Endothelial cell of umbilical vein (primary cell): ENCODE measurements at regions of chr16 and their contacts with region 1.

Region 1: GRCh38 chr16:13919683-13920509 is at the start of gene ERCC4:
- DNase-seq: peak; percentile 100
- H3K4me3 ChIP-seq: peak within 1 kb of the TSS; percentile 66 to 83 (median 67)
- H3K27ac ChIP-seq: peak within 1 kb of the TSS; percentile 37
- H3K4me1 ChIP-seq: peaks cover 10% of the 10 kb centered on the region
- H3K27me3 ChIP-seq: peaks cover 3% of the 10 kb centered on the region in 2 experiments
- CTCF ChIP-seq: peak; percentile 97
- POLR2A ChIP-seq: peak; percentile 83
- total RNA-seq, gene ERCC4: 15.1 and 17.1 TPM in 2 replicates

Region 2: GRCh38 chr16:13718748-13719147 is 201.1 kb before region 1 on chr16:
- CTCF ChIA-PET with region 1: no interaction called
- POLR2A ChIA-PET with region 1: no interaction called
- dilution Hi-C with region 1: no loop called
- intact Hi-C with region 1: no loop called
- DNase-seq: no peak
- H3K4me3 ChIP-seq: no peak overlapping the region
- H3K27ac ChIP-seq: no peak overlapping the region
- H3K4me1 ChIP-seq: no peaks in the 10 kb centered on the region
- H3K27me3 ChIP-seq: no peaks in the 10 kb centered on the region
- CTCF ChIP-seq: no peak
- POLR2A ChIP-seq: no peak

Region 3: DNA sequence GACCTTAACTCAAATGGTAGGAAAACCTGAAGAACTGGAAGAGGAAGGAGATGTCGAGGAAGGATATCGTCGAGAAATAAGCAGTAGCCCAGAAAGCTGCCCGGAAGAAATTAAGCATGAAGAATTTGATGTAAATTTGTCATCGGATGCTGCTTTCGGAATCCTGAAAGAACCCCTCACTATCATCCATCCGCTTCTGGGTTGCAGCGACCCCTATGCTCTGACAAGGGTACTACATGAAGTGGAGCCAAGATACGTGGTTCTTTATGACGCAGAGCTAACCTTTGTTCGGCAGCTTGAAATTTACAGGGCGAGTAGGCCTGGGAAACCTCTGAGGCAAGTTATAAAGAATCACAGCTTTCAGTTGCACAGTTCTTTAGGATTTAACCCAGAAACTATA is 15.5 kb after region 1 on chr16:
- CTCF ChIA-PET with region 1: interaction called, 11 read pairs
- POLR2A ChIA-PET with region 1: no interaction called
- dilution Hi-C with region 1: no loop called
- intact Hi-C with region 1: no loop called
- DNase-seq: no peak
- H3K4me3 ChIP-seq: no peak overlapping the region
- H3K27ac ChIP-seq: no peak overlapping the region
- H3K4me1 ChIP-seq: no peaks in the 10 kb centered on the region
- H3K27me3 ChIP-seq: no peaks in the 10 kb centered on the region
- CTCF ChIP-seq: peak; percentile 50 to 58
- POLR2A ChIP-seq: no peak

Region 4: DNA sequence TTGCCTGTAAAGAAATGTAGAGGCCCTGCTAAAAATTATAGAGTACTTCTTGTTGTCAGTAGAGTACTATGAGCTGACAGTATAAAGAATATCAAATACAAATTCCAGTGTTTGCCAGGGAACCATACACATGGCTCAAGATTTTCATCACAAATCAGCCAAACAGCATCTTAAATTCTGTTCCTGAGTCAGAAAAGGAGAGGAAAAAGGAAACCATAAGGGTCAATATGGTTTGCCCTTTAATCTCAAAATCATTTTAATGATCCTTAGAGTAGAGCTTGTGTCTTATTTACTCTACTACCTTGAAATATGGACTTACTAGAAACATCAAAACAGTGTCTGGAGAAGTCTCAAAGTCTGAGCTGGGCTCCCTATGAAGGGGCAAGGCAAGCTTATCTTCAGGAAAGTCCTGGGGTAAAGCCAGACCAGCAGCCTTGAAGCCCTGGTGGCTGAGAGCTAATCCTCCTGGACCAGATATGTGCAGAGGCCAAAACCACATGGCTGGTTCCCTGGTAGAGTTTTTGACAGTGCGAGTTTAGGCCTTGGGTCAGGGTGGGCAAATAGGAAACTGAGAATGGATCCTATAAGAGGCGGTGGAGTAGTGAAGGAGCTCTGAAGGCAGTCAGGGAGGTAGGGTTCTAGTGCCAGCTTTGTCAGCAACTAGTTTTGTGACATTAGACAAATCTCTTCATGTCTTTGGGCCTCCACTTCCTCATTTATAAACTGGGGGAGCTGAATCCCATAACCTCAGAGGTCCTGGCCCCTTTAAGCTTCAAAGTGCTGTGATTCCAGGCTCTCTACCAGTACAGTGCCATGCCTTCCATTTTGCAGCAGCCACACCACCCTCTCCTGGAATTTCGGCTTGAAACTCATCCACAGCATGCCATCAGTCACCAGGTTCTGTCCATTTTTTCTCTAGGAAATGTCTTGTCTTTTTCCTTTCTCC is 190.2 kb after region 1 on chr16:
- CTCF ChIA-PET with region 1: interaction called, 13 read pairs
- POLR2A ChIA-PET with region 1: no interaction called
- dilution Hi-C with region 1: no loop called
- intact Hi-C with region 1: no loop called
- DNase-seq: peak; percentile 40
- H3K4me3 ChIP-seq: no peak overlapping the region
- H3K27ac ChIP-seq: no peak overlapping the region
- H3K4me1 ChIP-seq: peaks cover 27% of the 10 kb centered on the region
- H3K27me3 ChIP-seq: no peaks in the 10 kb centered on the region
- CTCF ChIP-seq: no peak
- POLR2A ChIP-seq: no peak

Region 5: DNA sequence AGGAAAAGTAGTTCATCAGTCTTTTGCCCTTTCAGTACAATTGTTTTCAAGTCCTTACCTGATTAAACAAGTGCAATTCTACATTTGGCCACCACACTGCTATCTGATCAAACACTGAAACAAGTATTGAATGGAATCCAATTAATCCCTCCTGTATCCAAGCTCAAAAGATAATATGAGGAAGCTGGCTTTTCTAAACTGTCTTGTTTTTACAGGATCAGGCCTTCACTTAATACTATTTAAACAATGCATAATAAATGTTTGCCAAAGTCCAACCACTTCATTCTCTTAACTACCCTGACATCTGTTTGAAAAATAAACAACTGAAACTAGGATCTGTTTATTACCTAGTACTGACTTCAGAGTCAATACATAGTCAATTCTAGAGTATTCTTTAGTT is 282.8 kb after region 1 on chr16:
- CTCF ChIA-PET with region 1: interaction called, 20 read pairs
- POLR2A ChIA-PET with region 1: no interaction called
- dilution Hi-C with region 1: no loop called
- intact Hi-C with region 1: no loop called
- DNase-seq: peak; percentile 85
- H3K4me3 ChIP-seq: no peak overlapping the region
- H3K27ac ChIP-seq: no peak overlapping the region
- H3K4me1 ChIP-seq: no peaks in the 10 kb centered on the region
- H3K27me3 ChIP-seq: no peaks in the 10 kb centered on the region
- CTCF ChIP-seq: peak in 1 of 2 donors; percentile 33
- POLR2A ChIP-seq: no peak

Region 6: DNA sequence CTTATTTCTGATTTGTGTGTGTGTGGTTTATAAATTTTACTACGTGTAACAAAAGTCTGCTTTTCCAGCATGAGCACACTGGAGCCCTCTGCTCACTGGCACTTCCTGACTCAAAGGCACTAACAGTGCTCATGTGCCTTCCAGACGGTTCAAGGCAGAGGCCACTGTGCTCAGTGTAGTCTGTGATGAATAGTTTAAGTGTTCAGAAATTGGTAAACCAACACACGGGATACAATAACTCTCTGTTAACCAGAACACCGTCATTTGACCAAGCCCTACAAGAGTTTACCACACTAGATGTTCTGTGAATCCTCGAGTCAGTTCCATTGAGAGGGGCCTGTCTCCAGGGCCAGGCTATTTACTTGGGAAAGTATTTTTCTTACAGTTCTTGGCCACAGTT is 343.1 kb after region 1 on chr16:
- CTCF ChIA-PET with region 1: interaction called, 10 read pairs
- POLR2A ChIA-PET with region 1: no interaction called
- dilution Hi-C with region 1: no loop called
- intact Hi-C with region 1: no loop called
- DNase-seq: no peak
- H3K4me3 ChIP-seq: no peak overlapping the region
- H3K27ac ChIP-seq: no peak overlapping the region
- H3K4me1 ChIP-seq: no peaks in the 10 kb centered on the region
- H3K27me3 ChIP-seq: no peaks in the 10 kb centered on the region
- CTCF ChIP-seq: no peak
- POLR2A ChIP-seq: no peak

Region 7: DNA sequence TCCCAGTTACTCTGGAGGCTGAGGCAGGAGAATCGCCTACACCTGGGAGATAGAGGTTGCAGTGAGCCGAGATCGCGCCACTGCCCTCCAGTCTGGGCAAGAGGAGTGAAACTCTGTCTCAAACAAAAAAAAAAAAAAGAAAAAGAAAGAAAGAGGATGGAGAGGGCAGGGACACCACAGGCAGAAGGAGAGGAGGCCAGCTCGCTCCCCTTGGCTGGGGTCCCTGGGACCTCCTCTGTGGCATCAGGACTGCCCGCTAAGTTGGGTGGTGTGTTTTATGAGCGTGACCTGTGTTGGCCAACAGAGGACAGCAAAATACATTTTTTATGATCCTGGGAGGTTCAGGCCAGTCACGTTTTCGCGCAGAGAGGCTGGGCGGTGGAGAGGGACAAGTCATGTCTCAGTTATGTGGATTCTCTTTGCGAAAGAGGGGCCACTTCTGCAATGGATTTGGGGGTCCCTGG is 380.8 kb after region 1 on chr16:
- CTCF ChIA-PET with region 1: interaction called, 15 read pairs
- POLR2A ChIA-PET with region 1: interaction called, 3 read pairs
- dilution Hi-C with region 1: no loop called
- intact Hi-C with region 1: loop called (anchors 5 kb)
- DNase-seq: peak; percentile 78
- H3K4me3 ChIP-seq: no peak overlapping the region
- H3K27ac ChIP-seq: no peak overlapping the region
- H3K4me1 ChIP-seq: peaks cover 10% of the 10 kb centered on the region
- H3K27me3 ChIP-seq: no peaks in the 10 kb centered on the region
- CTCF ChIP-seq: peak; percentile 43 to 70
- POLR2A ChIP-seq: no peak